ENCODE measurements at regions of chr17 and their contacts with region 1.

Region 1: DNA sequence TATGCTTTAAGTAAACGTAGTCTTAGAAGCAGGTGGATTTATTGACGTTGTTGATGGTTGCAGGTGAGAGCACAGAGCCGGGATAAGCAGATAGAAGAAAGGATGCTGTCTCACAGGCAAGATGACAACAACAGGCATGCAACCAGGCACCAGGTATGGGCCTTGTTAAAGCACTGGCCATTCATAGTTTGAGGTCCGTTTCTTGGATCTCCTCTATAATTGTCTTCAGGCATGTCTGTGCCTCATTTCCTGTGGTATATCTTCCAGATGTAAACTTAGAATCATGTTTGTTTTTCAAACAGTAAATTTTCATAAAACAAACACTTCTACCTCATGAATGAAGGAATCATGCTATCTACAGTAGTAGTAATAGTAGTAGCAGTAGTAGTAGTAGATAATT is 20.6 kb downstream of the KAT7 start:
- DNase-seq: no peak
- H3K4me3 ChIP-seq: no peak overlapping the region
- H3K27ac ChIP-seq: peak overlapping the region; percentile 0; the same call in 1 of the 2 replicates
- H3K4me1 ChIP-seq: peaks cover 1 to 16% (median 7%) of the 10 kb centered on the region in 4 experiments; a peak in 6 of 7 replicates
- H3K27me3 ChIP-seq: no peaks in the 10 kb centered on the region
- CTCF ChIP-seq: no peak
- EP300 ChIP-seq: no peak
- POLR2A ChIP-seq: no peak
- RAD21 ChIP-seq: no peak

Region 2: GRCh38 chr17:49748791-49749190 is 60.3 kb before region 1 on chr17:
- CTCF ChIA-PET with region 1: no interaction called
- POLR2A ChIA-PET with region 1: no interaction called
- DNase-seq: no peak
- H3K4me3 ChIP-seq: no peak overlapping the region
- H3K27ac ChIP-seq: no peak overlapping the region
- H3K4me1 ChIP-seq: peaks cover 0 to 2% (median 0%) of the 10 kb centered on the region in 4 experiments; a peak in 2 of 7 replicates
- H3K27me3 ChIP-seq: no peaks in the 10 kb centered on the region
- CTCF ChIP-seq: no peak
- EP300 ChIP-seq: no peak
- POLR2A ChIP-seq: no peak
- RAD21 ChIP-seq: no peak

Region 3: DNA sequence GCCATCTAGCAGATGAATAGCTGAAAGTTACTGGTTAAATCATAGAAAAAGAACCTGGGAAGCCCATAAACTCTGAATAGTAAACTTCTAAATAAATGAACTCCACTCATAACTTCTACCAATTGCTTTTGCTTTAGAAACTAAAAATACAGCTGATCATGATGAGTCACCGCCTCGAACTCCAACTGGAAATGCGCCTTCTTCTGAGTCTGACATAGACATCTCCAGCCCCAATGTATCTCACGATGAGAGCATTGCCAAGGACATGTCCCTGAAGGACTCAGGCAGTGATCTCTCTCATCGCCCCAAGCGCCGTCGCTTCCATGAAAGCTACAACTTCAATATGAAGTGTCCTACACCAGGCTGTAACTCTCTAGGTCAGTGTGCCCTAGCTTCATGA is 10.9 kb before region 1 on chr17:
- CTCF ChIA-PET with region 1: interaction called, 3 read pairs
- POLR2A ChIA-PET with region 1: interaction called, 10 read pairs
- DNase-seq: no peak
- H3K4me3 ChIP-seq: no peak overlapping the region
- H3K27ac ChIP-seq: no peak overlapping the region
- H3K4me1 ChIP-seq: no peaks in the 10 kb centered on the region
- H3K27me3 ChIP-seq: no peaks in the 10 kb centered on the region
- CTCF ChIP-seq: no peak
- EP300 ChIP-seq: no peak
- POLR2A ChIP-seq: no peak
- RAD21 ChIP-seq: no peak

Measured in H1 (cell line).